Right ventricle myocardium inferior (tissue), 1 donor: ENCODE measurements at regions of chr9 and their contacts with region 1.

Region 1: DNA sequence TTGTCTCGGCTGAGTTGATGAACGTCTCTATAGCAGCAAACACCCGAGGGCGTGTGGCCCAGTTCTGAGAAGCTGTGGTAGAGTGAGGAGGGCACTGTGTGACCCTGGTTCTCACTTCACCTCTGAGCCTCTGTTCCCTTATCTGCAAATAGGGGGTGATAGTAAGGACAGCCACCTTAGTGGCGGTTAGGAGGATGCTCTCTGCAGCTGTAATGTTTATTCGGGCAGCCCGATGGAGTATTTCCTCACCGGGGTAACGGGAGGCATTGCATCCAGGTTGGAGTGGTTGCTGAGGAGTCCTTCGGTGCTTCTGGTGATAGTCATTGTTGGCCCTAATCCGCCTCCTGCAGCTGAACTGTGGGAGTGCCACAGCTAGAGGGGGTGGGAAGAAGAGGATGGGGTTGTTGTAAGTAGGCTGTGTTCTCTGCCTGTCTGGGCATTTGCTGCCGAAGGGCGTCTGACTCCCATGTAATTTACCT is 13.9 kb downstream of the PRRC2B start:
- DNase-seq: no peak
- ATAC-seq: peak; percentile 57

Region 2: GRCh38 chr9:131337131-131337848 is 70.5 kb before region 1 on chr9:
- intact Hi-C with region 1: no loop called
- DNase-seq: no peak
- ATAC-seq: no peak

Region 3: DNA sequence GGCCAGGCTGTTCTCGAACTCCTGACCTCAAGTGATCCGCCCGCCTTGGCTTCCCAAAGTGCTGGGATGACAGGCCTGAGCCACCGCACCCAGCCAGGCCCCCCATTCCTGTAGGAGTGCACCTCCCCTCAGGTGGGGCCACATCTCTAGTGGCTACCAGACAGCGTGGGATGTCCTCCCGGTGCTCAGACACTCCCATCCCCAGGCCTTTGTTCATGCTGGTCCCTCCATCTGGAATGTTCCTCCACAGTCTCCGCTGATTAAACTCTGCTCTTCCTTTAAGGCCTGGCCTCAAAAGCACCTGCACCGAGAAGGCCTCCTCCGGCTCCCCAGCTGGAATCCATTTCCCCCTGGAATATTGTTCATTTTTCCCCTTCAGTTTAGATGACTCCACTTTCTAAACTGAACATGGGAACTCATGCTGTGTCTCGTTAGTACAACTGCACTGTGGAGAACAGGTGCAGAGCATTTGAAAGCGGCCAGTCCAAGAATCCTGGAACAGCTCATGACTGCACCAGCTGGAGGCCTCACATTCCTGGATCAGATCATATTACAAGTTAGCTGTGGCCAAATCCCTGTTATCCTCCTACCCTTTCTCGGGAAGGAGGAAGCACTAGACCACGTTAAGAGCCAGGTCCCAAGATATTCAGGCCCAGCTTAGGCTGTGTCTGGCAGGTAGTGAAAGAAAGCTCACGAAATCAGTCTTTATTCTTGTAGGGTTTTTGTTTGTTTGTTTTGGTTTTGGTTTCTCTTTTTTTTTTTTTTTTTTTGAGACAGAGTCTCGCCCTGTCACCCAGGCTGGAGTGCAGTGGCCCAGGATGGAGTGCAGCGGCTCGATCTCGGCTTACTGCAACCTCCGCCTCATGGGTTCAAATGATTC is 24.7 kb before region 1 on chr9:
- intact Hi-C with region 1: no loop called
- DNase-seq: no peak
- ATAC-seq: peak; percentile 97

Region 4: GRCh38 chr9:131423171-131423581 is 15.4 kb after region 1 on chr9:
- intact Hi-C with region 1: loop called (anchors 2 kb)
- DNase-seq: no peak
- ATAC-seq: peak; percentile 69